CD4-positive, alpha-beta T cell (primary cell): ENCODE measurements at regions of chr12 and their contacts with region 1.

Region 1: DNA sequence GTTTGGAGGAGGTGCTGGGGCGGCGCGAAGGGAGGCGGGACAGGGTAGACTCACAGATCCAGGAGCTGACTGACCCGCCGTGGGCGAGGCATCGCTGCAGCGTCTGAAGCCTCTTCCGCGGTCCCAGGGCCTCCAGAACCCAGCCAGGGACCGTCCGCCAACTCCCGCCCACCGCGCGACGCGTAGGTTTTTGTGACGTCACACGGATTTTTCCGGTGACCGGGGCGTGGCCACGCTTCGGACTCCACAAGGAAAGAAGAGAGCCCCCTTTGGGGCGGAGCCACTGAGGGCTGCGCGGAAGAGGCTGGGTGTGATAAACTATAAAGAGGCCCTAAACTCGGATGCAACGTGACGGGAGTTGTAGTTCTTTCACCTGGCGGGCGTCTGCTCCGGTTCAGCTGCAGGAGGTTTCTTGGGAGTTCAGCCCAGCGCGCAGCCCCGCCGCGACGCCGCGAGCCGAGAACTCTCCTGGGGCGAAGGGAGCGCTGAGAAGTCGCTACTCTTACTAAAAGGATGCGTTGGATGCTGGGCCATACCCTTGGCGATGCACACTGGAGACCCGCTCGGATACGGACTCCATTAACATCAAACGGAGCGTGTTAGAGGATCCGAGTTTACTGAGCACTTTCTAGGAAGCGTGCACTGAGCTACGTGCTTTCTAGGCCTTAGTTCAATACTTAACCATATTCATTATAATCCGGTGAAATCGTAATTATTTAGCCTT is at the start of gene AMN1:
- DNase-seq: peak; percentile 95 to 99 (median 98)
- ATAC-seq: peak; percentile 88
- H3K4me3 ChIP-seq: peak within 1 kb of the TSS; percentile 81
- H3K4me3 Mint-ChIP-seq: peak within 1 kb of the TSS; percentile 93
- H3K27ac ChIP-seq: peak within 1 kb of the TSS; percentile 82 to 94
- H3K27ac Mint-ChIP-seq: peak within 1 kb of the TSS; percentile 97
- H3K4me1 ChIP-seq: peaks cover 40% of the 10 kb centered on the region
- H3K4me1 Mint-ChIP-seq: peaks cover 68% of the 10 kb centered on the region
- H3K27me3 ChIP-seq: no peaks in the 10 kb centered on the region
- H3K27me3 Mint-ChIP-seq: no peaks in the 10 kb centered on the region
- CTCF ChIP-seq: peak; percentile 21
- total RNA-seq, gene AMN1: 6.9 to 8.5 TPM

Region 2: DNA sequence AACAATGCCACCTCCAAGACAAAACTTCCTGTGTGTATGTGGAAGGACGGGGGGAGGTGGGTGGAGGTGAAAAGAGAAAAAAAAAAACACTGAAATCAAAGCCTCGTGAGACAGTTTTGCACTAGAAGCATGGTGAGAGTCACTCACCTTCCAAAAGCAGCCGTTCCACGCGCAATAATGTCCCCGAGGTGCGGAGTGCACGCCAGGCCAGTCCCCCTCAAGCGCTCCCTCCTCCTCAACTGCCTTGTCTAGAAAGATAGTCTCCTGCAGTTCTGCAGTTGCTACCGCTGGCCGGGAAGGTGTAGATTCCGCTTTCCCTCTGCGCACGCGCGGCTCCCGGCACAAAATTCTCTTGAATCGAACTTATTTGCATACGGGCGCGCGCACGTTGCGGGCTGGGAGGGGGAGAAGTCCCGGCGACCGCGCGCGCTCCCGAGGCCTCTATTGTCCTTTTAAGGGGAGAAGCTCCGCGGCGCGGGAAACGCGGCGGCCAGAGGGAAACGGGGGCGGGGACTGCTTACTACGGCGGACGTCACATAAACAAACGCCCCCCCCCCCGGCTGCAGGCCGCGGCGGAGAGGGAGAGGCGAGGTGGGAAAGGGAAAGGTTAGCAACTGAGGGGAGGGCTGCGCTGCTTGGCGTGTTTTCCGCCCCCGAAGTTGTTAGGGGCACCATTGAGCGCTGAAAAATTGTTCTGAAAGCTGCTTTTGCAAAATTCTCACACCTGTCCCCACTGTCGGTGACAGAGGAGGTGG is 403.0 kb before region 1 on chr12 and contains the start of gene SINHCAF:
- CTCF ChIA-PET with region 1: no interaction called
- POLR2A ChIA-PET with region 1: no interaction called
- intact Hi-C with region 1: loop called (anchors 10 kb)
- DNase-seq: peak; percentile 96 to 100 (median 99)
- ATAC-seq: peak; percentile 52
- H3K4me3 ChIP-seq: peak within 1 kb of the TSS; percentile 99
- H3K4me3 Mint-ChIP-seq: peak within 1 kb of the TSS; percentile 92
- H3K27ac ChIP-seq: peak within 1 kb of the TSS; percentile 77 to 95
- H3K27ac Mint-ChIP-seq: peak within 1 kb of the TSS; percentile 85
- H3K4me1 ChIP-seq: peaks cover 27% of the 10 kb centered on the region
- H3K4me1 Mint-ChIP-seq: peaks cover 32% of the 10 kb centered on the region
- H3K27me3 ChIP-seq: no peaks in the 10 kb centered on the region
- H3K27me3 Mint-ChIP-seq: no peaks in the 10 kb centered on the region
- CTCF ChIP-seq: no peak
- total RNA-seq, gene SINHCAF: 103 to 119 TPM

Region 3: DNA sequence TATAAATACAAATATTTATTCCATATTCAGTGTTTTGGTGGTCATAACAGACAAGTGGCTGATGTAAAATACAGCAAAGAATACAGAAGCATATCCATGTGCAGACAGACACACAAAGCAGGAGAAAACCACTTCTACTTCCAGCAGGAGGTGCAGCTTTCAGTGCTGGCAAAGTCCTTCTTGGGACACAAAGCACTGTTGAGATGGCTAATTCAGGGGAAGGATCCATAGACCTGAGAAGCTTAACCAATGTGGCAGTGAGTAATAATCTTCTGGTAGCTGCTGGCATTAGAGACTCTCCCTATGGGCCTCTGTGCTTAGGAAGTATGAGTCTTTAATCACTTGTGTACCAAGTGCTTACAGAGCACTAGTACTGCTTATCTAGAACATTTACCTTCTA is 27.0 kb before region 1 on chr12:
- CTCF ChIA-PET with region 1: no interaction called
- POLR2A ChIA-PET with region 1: interaction called, 12 read pairs
- intact Hi-C with region 1: no loop called
- DNase-seq: no peak
- ATAC-seq: no peak
- H3K4me3 ChIP-seq: no peak overlapping the region
- H3K4me3 Mint-ChIP-seq: no peak overlapping the region
- H3K27ac ChIP-seq: no peak overlapping the region
- H3K27ac Mint-ChIP-seq: no peak overlapping the region
- H3K4me1 ChIP-seq: peaks cover 7% of the 10 kb centered on the region
- H3K4me1 Mint-ChIP-seq: peaks cover 33% of the 10 kb centered on the region
- H3K27me3 ChIP-seq: no peaks in the 10 kb centered on the region
- H3K27me3 Mint-ChIP-seq: no peaks in the 10 kb centered on the region
- CTCF ChIP-seq: no peak

Region 4: GRCh38 chr12:31890295-31891285 is 161.5 kb after region 1 on chr12:
- CTCF ChIA-PET with region 1: no interaction called
- POLR2A ChIA-PET with region 1: interaction called, 22 read pairs
- intact Hi-C with region 1: loop called in 1 of 2 experiments (anchors 5 kb)
- DNase-seq: peak in 4 of 14 experiments; percentile 30 to 89 (median 67)
- ATAC-seq: peak; percentile 92
- H3K4me3 ChIP-seq: no peak overlapping the region
- H3K4me3 Mint-ChIP-seq: peak overlapping the region; percentile 60
- H3K27ac ChIP-seq: peak overlapping the region; percentile 55 to 68
- H3K27ac Mint-ChIP-seq: peak overlapping the region; percentile 89
- H3K4me1 ChIP-seq: peaks cover 81% of the 10 kb centered on the region
- H3K4me1 Mint-ChIP-seq: peaks cover 63% of the 10 kb centered on the region
- H3K27me3 ChIP-seq: no peaks in the 10 kb centered on the region
- H3K27me3 Mint-ChIP-seq: no peaks in the 10 kb centered on the region
- CTCF ChIP-seq: no peak

Region 5: DNA sequence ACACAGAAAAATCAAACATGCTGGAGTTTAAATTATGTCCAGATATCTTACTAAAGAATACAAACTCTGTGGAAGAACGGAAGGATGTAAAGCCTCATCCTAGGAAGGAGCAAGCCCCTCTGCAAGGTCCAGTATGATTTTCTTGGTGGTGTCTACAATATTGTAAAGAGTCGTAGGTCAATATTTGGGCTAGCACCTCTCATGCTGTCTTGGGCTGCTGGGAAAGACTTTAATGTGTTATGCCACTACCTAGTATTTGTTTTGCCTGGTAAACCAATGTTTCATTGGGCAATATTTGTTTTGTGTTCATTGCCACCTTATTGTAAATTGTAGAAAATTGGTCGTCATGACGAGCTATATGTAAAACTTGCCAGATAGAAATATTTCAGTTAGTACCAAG is 256.8 kb after region 1 on chr12:
- CTCF ChIA-PET with region 1: no interaction called
- POLR2A ChIA-PET with region 1: interaction called, 7 read pairs
- intact Hi-C with region 1: loop called in 1 of 2 experiments (anchors 5 kb)
- DNase-seq: no peak
- ATAC-seq: no peak
- H3K4me3 ChIP-seq: no peak overlapping the region
- H3K4me3 Mint-ChIP-seq: no peak overlapping the region
- H3K27ac ChIP-seq: no peak overlapping the region
- H3K27ac Mint-ChIP-seq: peak overlapping the region; percentile 22
- H3K4me1 ChIP-seq: no peaks in the 10 kb centered on the region
- H3K4me1 Mint-ChIP-seq: peaks cover 54% of the 10 kb centered on the region
- H3K27me3 ChIP-seq: no peaks in the 10 kb centered on the region
- H3K27me3 Mint-ChIP-seq: no peaks in the 10 kb centered on the region
- CTCF ChIP-seq: no peak

Region 6: DNA sequence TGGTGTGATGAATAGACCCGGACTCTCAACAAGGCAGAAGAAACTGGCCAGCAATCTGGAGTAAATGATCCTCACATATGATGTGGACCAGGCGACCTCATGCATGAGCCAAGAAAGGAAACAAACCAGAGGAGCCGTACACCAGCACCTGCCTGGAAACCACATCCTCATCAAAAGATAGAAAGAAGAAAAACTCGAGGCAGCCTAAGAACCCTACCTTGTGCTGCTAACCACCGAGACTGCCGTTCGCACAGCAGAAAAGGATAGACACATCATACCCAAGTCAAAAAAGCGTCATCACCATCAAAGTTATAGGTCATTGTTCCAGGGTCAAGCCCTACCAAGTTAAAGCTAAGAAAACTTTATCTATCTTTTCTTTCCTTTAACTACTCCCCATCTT is 296.8 kb after region 1 on chr12:
- CTCF ChIA-PET with region 1: no interaction called
- POLR2A ChIA-PET with region 1: no interaction called
- intact Hi-C with region 1: loop called in 1 of 2 experiments (anchors 5 kb)
- DNase-seq: peak; percentile 15 to 80 (median 36)
- ATAC-seq: peak; percentile 97
- H3K4me3 ChIP-seq: no peak overlapping the region
- H3K4me3 Mint-ChIP-seq: peak overlapping the region; percentile 21
- H3K27ac ChIP-seq: no peak overlapping the region
- H3K27ac Mint-ChIP-seq: peak overlapping the region; percentile 69
- H3K4me1 ChIP-seq: peaks cover 15% of the 10 kb centered on the region
- H3K4me1 Mint-ChIP-seq: peaks cover 43% of the 10 kb centered on the region
- H3K27me3 ChIP-seq: no peaks in the 10 kb centered on the region
- H3K27me3 Mint-ChIP-seq: no peaks in the 10 kb centered on the region
- CTCF ChIP-seq: no peak

Region 7: GRCh38 chr12:32106517-32107358 is 377.7 kb after region 1 on chr12 and contains the start of gene BICD1:
- CTCF ChIA-PET with region 1: no interaction called
- POLR2A ChIA-PET with region 1: no interaction called
- intact Hi-C with region 1: loop called in 1 of 2 experiments (anchors 5 kb)
- DNase-seq: peak; percentile 39 to 89 (median 66)
- ATAC-seq: peak; percentile 82
- H3K4me3 ChIP-seq: peak within 1 kb of the TSS; percentile 86
- H3K4me3 Mint-ChIP-seq: peak within 1 kb of the TSS; percentile 97
- H3K27ac ChIP-seq: peak within 1 kb of the TSS in 1 of 2 donors; percentile 9
- H3K27ac Mint-ChIP-seq: peak within 1 kb of the TSS; percentile 73
- H3K4me1 ChIP-seq: peaks cover 15% of the 10 kb centered on the region
- H3K4me1 Mint-ChIP-seq: peaks cover 35% of the 10 kb centered on the region
- H3K27me3 ChIP-seq: no peaks in the 10 kb centered on the region
- H3K27me3 Mint-ChIP-seq: no peaks in the 10 kb centered on the region
- CTCF ChIP-seq: peak; percentile 24
- total RNA-seq, gene BICD1: 13.5 to 14.3 TPM